ENCODE measurements at regions of chr17 and their contacts with region 1.

Region 1: DNA sequence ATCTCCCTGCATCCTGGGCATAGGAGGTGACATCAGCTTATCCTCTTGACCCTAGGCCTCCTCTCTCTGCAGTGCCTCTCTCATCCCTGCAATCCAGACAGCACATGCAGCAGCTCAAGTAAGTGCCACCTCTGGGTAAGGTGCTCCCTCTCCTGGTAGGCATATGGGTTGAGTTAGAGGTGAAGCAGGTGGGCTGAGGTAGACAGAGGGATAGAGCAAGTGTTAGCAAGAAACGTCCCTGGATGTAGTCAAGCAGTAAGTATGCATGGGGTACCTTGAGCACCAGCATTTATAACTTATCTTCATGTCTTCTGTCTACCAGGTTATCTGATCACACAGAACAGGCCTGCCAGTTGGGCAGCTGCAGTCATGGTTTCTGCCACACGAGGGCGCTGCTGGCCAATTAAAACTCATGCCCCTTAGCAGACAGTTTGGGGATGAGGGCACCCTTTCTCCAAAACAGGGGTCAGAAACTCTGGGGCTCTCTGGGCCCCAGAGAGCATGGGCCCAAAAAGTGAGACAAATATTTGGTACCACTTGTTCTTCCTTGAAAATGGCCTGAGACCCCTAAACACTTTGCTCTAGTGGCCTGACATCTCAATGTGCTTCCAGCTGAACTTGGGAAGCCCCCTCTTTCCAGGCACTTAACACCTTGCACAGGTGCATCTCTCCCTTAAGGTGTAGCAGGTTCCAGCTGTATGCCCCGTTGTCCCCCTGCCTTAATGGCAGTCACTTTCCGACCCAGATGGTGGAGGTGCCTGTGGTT is 59.8 kb downstream of the NEUROD2 start:
- DNase-seq: peak; percentile 79
- CTCF ChIP-seq: peak; percentile 94

Region 2: DNA sequence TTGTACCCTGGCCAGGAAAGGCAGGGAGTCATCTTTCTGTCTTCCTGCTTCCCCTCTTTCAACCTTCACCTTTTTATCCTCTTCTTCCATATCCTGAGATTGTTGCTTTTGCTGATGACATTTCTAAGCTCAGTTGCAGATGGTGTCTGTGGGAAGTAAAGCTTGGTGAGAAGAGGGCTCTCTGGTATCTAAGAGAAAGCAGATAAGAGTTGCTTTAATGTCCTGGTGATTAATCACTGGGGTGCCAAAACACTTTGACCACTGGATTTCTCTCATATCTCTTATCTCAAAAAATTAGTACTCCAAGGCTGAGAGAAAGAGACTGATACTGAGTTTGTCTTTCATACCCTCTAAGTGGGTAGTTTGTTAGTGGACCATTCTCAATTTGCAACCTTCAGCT is 11.4 kb before region 1 on chr17:
- CTCF ChIA-PET with region 1: interaction called, 22 read pairs
- POLR2A ChIA-PET with region 1: interaction called, 4 read pairs
- DNase-seq: no peak
- CTCF ChIP-seq: no peak

Region 3: GRCh38 chr17:39563476-39563875 is 15.6 kb after region 1 on chr17:
- CTCF ChIA-PET with region 1: interaction called, 56 read pairs
- POLR2A ChIA-PET with region 1: no interaction called
- DNase-seq: no peak
- CTCF ChIP-seq: no peak

Region 4: GRCh38 chr17:39659279-39660010 is 111.5 kb after region 1 on chr17:
- CTCF ChIA-PET with region 1: no interaction called
- POLR2A ChIA-PET with region 1: no interaction called
- DNase-seq: peak; percentile 56
- CTCF ChIP-seq: no peak

Measured in GM10248 (cell line).